Dorsolateral prefrontal cortex (tissue), 120 donors: ENCODE measurements at regions of chr6 and their contacts with region 1.

Region 1: DNA sequence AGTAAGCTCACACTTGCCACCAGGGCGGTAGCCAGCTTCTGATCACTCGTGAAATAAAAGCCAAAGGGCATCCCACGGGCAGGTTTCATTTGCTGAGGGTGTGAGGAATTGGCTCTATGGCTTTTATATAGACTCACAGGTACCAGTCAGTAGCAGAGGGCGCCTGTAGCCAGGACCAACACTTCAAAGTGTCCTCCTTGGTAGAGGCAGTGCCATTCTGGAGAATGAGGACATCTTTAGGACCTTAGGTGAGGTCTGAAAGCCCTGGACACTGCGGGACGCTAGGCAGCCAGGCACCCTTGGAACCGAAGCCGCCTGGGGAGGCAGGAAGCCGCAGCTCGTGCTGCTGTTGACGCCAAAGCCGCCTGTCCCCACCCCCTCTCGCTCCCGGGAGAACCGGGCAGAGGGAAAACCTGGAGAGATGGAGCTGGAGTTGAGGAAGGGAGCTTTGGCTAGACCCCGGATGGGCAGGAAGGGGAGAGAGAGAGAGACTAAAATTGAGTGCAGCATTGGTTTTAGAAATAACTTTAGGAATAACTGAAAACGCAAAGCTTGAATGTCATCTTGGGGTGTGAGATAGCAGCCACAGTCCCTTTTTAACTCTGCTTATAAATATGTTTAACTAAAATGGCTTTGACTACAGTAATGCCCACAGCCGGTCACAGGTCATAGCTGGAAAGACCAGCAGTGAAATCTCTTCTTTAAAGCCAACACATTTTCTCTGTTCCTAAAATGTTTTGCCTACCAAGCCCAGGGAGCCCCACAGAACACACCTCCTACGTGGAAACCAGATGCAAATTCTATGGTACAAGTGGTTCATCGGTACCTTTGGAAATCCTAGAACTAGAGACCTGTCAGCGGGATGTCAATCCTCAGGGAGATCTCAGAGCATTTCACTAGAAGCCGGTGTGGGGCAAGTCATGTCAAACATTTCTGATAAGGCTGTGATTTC is 128.5 kb upstream of the CDYL start:
- DNase-seq: peak; percentile 16 to 84 (median 71)
- H3K4me3 ChIP-seq: peak overlapping the region in 58 of 59 donors; percentile 21 to 75 (median 55)
- H3K27ac ChIP-seq: peak overlapping the region in 31 of 59 donors; percentile 4 to 81 (median 53)
- H3K27me3 ChIP-seq: no peaks in the 10 kb centered on the region
- CTCF ChIP-seq: peak in 18 of 56 donors; percentile 5 to 45 (median 18)

Region 2: DNA sequence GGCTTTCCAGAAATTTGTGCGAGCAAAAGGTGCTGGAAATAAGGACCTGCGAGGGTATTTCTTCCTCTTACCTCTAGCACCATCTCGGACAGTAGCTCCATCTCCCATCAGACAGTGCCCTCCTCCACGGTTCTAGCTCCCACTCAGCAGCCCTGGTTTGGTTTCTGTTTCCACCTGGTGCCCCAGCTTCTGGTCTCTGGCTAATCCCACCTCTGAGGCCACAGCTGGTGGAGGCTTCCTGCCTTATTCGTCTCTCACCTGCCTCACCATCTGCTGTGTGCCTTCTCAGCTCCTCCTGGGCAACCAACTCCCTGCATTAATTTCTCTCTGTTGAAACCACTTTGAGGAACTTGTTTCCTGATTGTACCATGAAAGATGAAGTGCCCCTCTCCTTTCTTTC is 33.9 kb before region 1 on chr6:
- intact Hi-C with region 1: loop called in 1 of 2 experiments (anchors 1 kb)
- DNase-seq: no peak
- H3K4me3 ChIP-seq: no peak overlapping the region
- H3K27ac ChIP-seq: no peak overlapping the region
- H3K27me3 ChIP-seq: no peaks in the 10 kb centered on the region
- CTCF ChIP-seq: no peak